HepG2 (cell line): ENCODE measurements at regions of chr9 and their contacts with region 1.

Region 1: GRCh38 chr9:20611751-20612287 is 10.5 kb downstream of the MLLT3 start:
- DNase-seq: peak; percentile 64
- ATAC-seq: peak; percentile 51; the same call in 2 of the 3 replicates
- H3K4me3 ChIP-seq: no peak overlapping the region
- H3K27ac ChIP-seq: no peak overlapping the region
- H3K4me1 ChIP-seq: peaks cover 9% of the 10 kb centered on the region
- H3K27me3 ChIP-seq: no peaks in the 10 kb centered on the region; a peak in 1 of 5 replicates
- CTCF ChIP-seq: no peak
- EP300 ChIP-seq: no peak
- POLR2A ChIP-seq: no peak
- RAD21 ChIP-seq: no peak

Region 2: DNA sequence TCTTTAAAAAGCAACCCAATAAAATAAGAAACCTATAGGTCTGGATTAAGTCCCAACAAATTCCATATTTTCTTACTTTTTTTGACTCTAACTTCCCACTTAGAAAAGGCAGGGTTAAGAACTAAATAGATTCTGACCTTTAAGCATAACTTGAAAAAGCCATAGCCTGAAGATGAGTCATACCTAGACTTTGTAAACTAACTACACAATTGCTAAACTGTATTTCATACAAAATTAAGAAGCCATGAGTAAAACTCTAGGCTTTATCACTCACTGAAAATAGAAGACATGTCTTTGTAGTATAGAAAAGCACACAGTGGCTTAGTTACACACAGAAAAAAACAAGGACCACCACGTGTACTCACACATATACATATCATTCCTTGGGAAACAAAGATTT is 41.1 kb before region 1 on chr9:
- CTCF ChIA-PET with region 1: no interaction called
- POLR2A ChIA-PET with region 1: no interaction called
- in situ Hi-C with region 1: no loop called
- intact Hi-C with region 1: loop called (anchors 5 kb)
- DNase-seq: peak; percentile 64
- ATAC-seq: peak; percentile 73
- H3K4me3 ChIP-seq: no peak overlapping the region
- H3K27ac ChIP-seq: peak overlapping the region; percentile 28
- H3K4me1 ChIP-seq: peaks cover 38% of the 10 kb centered on the region
- H3K27me3 ChIP-seq: no peaks in the 10 kb centered on the region
- CTCF ChIP-seq: no peak
- EP300 ChIP-seq: no peak
- POLR2A ChIP-seq: no peak
- RAD21 ChIP-seq: no peak